ENCODE measurements at regions of chr10 and their contacts with region 1.

Region 1: DNA sequence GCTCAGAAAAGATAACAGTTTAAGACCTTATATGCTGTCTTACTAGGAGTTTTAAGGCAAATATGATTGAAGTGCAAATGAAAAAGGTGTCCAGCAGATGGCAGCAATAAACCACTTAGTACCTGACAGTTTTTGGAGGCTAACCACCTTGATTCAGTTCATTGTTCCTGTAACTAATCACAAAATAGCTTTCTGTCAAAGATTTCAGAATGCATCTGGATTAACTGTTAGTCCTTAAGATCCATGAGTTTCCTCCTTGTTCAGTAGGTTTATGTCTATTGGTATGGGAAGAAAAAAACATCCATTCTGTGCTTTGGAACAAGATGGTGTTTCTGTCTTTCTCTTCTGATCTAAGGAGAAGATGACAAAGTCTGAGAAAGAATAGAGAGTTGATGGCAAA is 46.6 kb downstream of the CCSER2 start:
- DNase-seq: no peak
- H3K4me3 ChIP-seq: no peak overlapping the region
- H3K27ac ChIP-seq: no peak overlapping the region
- H3K4me1 ChIP-seq: no peaks in the 10 kb centered on the region
- H3K27me3 ChIP-seq: no peaks in the 10 kb centered on the region
- CTCF ChIP-seq: peak; percentile 40 to 68 (median 67)
- POLR2A ChIP-seq: no peak

Region 2: DNA sequence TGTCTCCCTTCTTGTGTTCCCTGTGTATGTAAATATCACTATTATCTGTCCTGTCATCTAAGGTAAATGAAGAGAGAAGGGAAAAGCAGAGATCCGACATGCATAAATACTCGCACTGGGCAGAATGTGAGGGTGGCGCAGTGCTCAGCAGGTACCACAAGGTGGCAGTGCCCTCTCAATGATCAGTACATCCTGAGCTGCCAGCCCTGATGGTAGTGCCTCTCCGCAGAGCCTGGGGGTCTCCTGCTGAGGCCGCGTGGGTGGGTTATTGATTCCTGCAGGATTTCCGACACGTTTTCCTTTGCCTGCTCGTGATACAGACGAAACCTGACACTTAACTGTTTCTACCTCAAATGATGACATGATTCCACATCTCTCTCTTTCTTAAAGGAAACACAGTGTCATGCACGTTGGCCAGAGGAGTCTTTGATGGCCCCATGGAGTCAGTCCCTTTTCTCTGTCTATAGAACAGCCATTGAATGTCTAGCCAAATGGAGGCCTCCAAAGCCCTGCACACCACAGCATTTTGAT is 110.3 kb before region 1 on chr10:
- intact Hi-C with region 1: loop called (anchors 5 kb)
- DNase-seq: peak; percentile 80 to 93
- H3K4me3 ChIP-seq: no peak overlapping the region
- H3K27ac ChIP-seq: no peak overlapping the region
- H3K4me1 ChIP-seq: no peaks in the 10 kb centered on the region
- H3K27me3 ChIP-seq: no peaks in the 10 kb centered on the region
- CTCF ChIP-seq: peak; percentile 71 to 84 (median 82)
- POLR2A ChIP-seq: no peak

Region 3: DNA sequence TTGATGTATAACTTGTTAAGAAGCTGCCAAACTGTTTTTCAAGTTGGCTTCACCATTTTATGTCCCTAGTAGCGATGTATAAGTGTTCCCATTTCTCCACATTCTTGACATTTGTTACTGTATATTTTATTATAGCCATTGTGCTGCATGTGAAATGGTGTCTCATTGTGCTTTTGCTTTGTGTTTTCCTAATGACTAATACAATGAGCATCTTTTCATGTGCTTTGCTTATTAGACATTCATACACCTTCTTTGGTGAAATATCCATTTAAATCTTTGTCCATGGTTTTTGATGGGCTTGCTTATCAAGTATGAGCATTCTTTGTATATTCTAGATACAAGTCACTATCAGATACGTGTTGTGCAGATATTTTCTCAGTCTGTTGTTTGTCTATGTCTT is 156.4 kb after region 1 on chr10:
- intact Hi-C with region 1: loop called (anchors 5 kb)
- DNase-seq: no peak
- H3K4me3 ChIP-seq: no peak overlapping the region
- H3K27ac ChIP-seq: no peak overlapping the region
- H3K4me1 ChIP-seq: no peaks in the 10 kb centered on the region
- H3K27me3 ChIP-seq: no peaks in the 10 kb centered on the region
- CTCF ChIP-seq: no peak
- POLR2A ChIP-seq: no peak

Measured in vagina (tissue), 2 donors.